Activated T-helper 1 cell treated with anti-CD3 and anti-CD28 coated beads, Interleukin-12 subunit alpha, Interleukin-12 subunit beta, Interleukin-2, Interleukin-4 antibody, amounts not matched to agents 30 ng/mL and 10 ng/mL and 1 ng/mL, durations not matched to agents 14 hours and 24 hours and 36 hours (primary cell): ENCODE measurements at regions of chr17 and their contacts with region 1.

Region 1: DNA sequence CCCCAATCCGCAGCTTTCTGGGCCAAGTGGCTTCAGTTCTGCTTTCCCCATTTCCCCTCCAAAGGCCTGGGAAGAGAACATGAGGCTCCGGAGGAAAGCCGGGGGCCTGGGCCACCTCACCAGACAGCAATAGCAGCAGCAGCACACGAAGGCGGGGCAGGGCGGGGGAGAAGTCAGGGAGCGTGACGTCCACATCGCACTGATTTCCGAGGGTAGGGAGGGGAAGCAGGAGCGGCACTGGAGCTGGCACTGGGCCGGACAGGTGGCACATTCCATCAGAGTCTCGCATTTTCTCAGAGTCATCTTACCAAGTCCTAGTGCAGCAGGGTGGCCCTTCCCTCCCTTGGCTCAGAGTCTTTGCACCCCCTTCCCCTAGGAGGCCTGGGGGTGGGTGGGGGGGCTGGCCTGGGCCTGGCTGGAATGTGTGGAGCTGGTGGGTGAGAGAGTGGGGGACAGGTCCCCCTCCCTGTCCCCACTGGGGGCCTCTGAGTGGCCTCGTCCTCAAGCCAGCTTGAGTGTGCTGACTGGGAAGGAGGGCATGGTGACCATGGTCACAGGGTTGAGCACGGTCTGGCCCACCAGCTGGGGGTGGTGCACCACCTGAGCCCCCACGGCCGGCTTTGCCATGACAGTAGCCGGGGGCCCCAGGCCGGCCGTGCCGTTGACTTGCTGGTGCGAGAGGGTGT is 14.3 kb downstream of the MNT start:
- DNase-seq: no peak
- H3K4me3 Mint-ChIP-seq: no peak overlapping the region
- H3K27ac Mint-ChIP-seq: no peak overlapping the region
- H3K4me1 Mint-ChIP-seq: peaks cover 10% of the 10 kb centered on the region
- H3K27me3 Mint-ChIP-seq: no peaks in the 10 kb centered on the region

Region 2: GRCh38 chr17:2347547-2348307 is 38.8 kb before region 1 on chr17:
- intact Hi-C with region 1: no loop called
- DNase-seq: no peak
- H3K4me3 Mint-ChIP-seq: no peak overlapping the region
- H3K27ac Mint-ChIP-seq: no peak overlapping the region
- H3K4me1 Mint-ChIP-seq: no peaks in the 10 kb centered on the region
- H3K27me3 Mint-ChIP-seq: peaks cover 2% of the 10 kb centered on the region

Region 3: GRCh38 chr17:2416010-2416734 is 29.6 kb after region 1 on chr17:
- intact Hi-C with region 1: loop called (anchors 1 kb)
- DNase-seq: peak; percentile 78
- H3K4me3 Mint-ChIP-seq: no peak overlapping the region
- H3K27ac Mint-ChIP-seq: no peak overlapping the region
- H3K4me1 Mint-ChIP-seq: no peaks in the 10 kb centered on the region
- H3K27me3 Mint-ChIP-seq: no peaks in the 10 kb centered on the region

Region 4: GRCh38 chr17:2592971-2593820 is 206.7 kb after region 1 on chr17 and contains the start of gene PAFAH1B1:
- intact Hi-C with region 1: no loop called
- DNase-seq: peak; percentile 94
- H3K4me3 Mint-ChIP-seq: peak within 1 kb of the TSS; percentile 96
- H3K27ac Mint-ChIP-seq: peak within 1 kb of the TSS; percentile 94
- H3K4me1 Mint-ChIP-seq: peaks cover 28% of the 10 kb centered on the region
- H3K27me3 Mint-ChIP-seq: peaks cover 3% of the 10 kb centered on the region
- total RNA-seq, gene PAFAH1B1: 167 TPM in 2 replicates

Region 5: DNA sequence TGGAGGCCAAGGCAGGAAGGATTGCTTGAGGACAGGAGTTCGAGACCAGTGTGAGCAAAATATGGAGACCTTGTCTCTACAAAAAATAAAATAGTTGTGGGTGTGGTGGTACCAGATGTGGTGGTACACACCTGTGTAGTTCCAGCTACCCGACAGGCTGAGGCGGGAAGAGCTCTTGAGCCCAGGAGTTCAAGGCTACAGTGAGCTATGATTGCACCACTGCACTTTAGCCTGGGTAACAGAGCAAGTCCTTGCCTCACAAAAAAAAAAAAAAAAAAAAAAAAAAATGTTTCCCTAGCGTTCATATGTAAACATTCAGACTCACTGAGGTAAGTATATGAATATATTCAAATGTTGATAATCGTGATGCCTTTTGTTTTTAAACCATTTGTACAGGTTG is 285.5 kb after region 1 on chr17:
- intact Hi-C with region 1: loop called (anchors 1 kb)
- DNase-seq: no peak
- H3K4me3 Mint-ChIP-seq: no peak overlapping the region
- H3K27ac Mint-ChIP-seq: no peak overlapping the region
- H3K4me1 Mint-ChIP-seq: peaks cover 10% of the 10 kb centered on the region
- H3K27me3 Mint-ChIP-seq: no peaks in the 10 kb centered on the region